GM13976 (cell line): ENCODE measurements at regions of chr10 and their contacts with region 1.

Region 1: DNA sequence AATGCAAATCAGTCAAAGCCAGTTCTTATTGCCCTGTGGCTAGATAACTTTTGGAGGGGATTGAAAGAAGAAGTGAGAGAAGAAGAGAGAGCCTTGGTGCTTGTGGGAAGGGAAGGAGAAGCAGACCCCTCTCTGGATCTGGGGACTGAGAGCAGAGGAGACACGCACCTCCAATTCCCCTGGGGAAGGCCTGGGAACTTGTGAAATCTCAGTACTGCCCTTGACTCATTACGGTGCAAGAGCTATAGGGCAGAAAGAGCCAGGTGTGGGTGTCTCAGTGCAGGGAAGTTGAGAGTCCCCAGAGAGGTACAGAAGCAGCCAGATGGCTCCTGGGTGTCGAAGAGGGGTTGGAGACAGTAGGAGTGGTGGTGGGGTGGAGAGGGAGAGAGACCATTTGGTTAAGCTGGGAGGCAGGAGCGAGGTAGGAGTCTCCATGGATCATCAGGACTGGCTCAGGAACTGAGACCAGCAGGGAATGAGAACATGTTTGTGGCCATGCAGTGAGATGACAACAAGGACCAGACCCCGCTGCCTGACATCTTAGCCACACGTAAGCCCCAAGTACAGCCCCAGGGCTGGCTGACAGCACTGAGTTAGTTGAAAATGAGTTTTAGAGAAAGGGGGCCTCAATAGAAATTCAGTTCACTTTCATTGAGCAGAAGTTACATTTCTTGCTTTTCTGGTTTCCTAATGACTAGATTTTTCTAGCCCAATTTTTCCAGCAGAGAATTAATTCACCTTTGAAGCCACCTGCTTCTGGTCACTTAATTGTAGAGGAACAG is 238.2 kb downstream of the BUB3 start:
- DNase-seq: peak; percentile 76
- CTCF ChIP-seq: no peak

Region 2: DNA sequence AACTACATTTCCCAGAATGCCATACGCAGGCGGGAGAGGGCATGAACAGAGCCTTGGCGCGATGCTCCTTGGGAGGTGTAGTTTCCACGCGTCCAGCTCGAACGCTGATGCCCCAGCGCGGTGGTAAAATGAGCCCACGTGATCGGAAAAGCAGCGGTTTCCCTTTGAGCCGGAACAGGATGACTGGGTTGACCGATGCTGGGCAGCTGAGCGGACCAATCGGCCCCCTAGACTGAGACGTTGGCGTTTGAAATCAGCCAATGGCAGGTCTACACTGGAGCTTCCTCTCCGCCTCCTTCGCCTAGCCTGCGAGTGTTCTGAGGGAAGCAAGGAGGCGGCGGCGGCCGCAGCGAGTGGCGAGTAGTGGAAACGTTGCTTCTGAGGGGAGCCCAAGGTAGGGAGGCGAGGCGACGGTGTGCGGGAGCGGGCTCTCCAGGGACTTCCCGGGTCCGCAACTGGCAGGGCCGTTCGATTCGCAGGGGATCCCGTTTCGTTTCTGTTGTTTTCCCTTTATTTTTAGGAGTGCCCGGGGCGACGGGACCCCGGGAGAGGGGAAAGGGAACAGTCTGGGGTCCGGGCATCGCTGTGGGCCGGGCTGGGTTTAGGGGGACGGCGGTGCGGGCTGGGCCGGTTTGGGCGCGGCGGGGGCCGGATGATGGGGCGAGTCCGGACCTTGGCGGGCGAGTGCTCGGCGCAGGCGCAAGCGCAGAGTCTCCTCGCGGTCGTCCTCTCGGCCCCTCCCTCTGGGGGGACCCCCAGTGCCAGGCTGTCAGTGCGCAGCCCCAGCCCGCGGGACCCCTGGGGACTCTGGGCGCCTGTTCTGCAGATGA is 238.1 kb before region 1 on chr10 and contains the start of gene BUB3:
- in situ Hi-C with region 1: loop called (anchors 5 kb)
- DNase-seq: peak; percentile 96
- CTCF ChIP-seq: no peak